ENCODE measurements at regions of chr20 and their contacts with region 1.

Region 1: GRCh38 chr20:62156592-62157386 is 13.2 kb downstream of the SS18L1 start:
- DNase-seq: peak in 1 of 2 donors; percentile 54
- ATAC-seq: peak; percentile 75 to 76
- H3K4me3 ChIP-seq: no peak overlapping the region
- H3K27ac ChIP-seq: no peak overlapping the region
- H3K4me1 ChIP-seq: peaks cover 7 to 27% of the 10 kb centered on the region in 2 donors
- H3K27me3 ChIP-seq: no peaks in the 10 kb centered on the region
- CTCF ChIP-seq: peak; percentile 30 to 78 (median 66)
- POLR2A ChIP-seq: no peak

Region 2: DNA sequence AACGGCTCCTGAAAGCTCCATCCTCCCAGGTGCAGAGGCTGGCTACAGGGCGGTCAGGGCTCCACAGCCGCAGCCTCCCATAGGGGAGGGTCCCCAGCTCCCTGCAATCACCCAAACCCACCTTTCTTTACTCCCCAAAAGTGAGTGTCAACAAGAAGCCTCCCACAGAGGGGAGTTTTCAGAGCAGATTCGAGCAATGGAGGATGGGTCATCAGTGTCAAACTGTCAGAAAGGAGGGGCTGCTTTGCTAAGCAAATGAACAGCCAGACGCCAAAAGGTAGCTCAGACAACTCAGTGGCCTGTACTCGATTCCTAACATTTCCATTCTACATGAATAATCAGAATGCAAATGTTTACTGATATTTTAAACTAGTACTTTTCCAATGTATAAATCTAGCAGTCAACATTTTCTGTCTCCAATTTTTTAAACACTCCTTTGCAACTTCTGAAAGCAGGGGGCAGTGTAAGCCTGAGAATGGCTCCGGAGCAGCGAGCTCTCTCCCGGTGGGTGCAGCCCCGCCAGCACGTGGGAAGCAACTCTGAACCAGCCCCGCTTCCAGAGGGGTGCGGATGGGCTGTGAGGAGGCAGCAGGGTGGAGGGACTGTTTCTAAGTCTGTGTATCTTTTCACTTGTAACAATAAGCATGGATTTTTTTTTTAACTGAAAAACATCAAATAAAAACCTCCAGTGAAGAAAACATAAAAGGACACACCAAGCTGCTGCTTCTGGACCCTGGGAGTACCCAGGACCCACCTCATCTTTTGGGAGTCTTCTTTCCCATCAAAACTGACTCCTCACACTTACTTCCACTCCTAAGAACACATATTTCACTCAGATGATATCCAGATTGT is 146.0 kb before region 1 on chr20:
- in situ Hi-C with region 1: no loop called
- intact Hi-C with region 1: loop called (anchors 2 kb)
- DNase-seq: peak in 1 of 2 donors; percentile 40
- ATAC-seq: peak in 1 of 2 donors; percentile 67
- H3K4me3 ChIP-seq: no peak overlapping the region
- H3K27ac ChIP-seq: no peak overlapping the region
- H3K4me1 ChIP-seq: peaks cover 0 to 5% of the 10 kb centered on the region in 2 donors
- H3K27me3 ChIP-seq: no peaks in the 10 kb centered on the region
- CTCF ChIP-seq: peak; percentile 57 to 67 (median 60)
- POLR2A ChIP-seq: no peak

Region 3: DNA sequence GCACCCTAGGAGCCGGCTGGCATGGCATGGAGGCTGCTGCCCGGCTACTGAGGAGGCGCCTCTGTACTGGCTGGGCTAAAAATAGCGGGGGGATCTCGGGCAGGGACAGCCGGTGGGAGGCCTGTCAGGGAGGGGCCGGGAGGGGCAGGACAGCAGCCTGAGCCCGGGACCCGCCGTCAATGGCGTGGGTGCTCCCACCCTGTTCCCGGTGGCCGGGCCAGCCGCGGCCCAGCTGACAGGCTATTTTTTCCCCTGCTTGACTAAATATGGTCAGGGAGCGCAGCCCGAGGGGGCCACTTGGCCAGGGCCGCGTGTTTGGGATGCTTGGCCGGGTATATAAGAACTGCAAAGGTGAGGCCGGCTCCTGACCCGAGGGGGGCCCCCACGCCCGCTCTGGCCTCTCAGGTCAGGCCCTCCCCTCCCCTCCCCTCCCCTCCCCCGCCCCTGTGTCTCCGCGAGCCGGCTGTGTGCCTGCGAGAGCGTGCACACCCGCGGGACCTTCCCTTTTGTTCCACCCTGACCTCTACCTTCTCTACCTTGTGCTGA is 393.4 kb after region 1 on chr20:
- in situ Hi-C with region 1: no loop called
- intact Hi-C with region 1: no loop called
- DNase-seq: peak; percentile 71 to 92
- ATAC-seq: peak; percentile 37 to 55
- H3K4me3 ChIP-seq: peak overlapping the region; percentile 50 to 81 (median 70)
- H3K27ac ChIP-seq: peak overlapping the region; percentile 91 to 100 (median 98)
- H3K4me1 ChIP-seq: peaks cover 35 to 66% of the 10 kb centered on the region in 2 donors
- H3K27me3 ChIP-seq: no peaks in the 10 kb centered on the region
- CTCF ChIP-seq: no peak
- POLR2A ChIP-seq: peak; percentile 46 to 64